Ovary (tissue), 10 donors: ENCODE measurements at regions of chr5 and their contacts with region 1.

Region 1: DNA sequence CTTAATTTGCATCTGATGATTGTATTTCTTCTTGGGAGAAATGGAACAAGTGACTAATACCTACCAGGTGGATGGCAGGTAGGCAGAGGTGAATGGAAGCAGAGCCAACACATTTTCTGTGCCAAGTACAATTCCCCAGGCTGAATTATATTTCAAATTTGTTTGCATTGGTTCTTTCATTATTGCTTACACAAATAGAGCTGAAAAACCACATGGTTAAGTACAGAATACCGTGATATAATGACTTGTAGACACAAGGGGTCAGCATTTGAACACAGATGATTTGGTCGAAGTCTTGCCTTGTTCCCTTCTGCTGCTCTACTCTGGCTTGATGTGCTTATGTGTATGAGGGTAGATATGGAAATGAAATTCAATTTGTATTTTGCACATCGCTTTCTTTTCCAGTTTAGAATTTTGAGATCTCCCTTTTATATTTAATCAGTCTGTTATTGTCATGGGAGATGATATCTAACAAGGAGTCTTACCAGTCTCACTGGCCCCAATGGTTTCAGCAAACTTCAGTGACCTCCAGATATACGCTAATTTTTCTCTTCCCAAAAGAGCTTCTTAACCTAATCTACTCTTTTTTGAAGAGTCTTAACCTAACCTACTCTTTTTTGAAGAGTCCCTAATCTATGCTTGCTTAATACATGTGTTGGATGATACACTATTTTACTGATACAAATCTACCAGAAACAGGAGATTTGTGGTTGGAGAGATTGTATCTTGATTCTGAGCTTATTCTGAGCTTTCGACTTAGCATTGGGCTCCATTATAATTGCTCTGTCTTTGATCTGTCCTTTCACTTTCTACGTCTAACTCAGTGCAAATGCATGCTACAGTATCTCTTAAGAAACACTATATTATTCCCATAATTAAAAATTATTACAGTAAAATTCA is 88.1 kb downstream of the PCSK1 start:
- DNase-seq: no peak
- H3K4me3 ChIP-seq: no peak overlapping the region
- H3K27ac ChIP-seq: no peak overlapping the region
- H3K4me1 ChIP-seq: no peaks in the 10 kb centered on the region
- H3K27me3 ChIP-seq: no peaks in the 10 kb centered on the region
- CTCF ChIP-seq: peak in 1 of 3 donors; percentile 30
- EP300 ChIP-seq: no peak
- POLR2A ChIP-seq: no peak

Region 2: GRCh38 chr5:96370976-96371375 is 26.0 kb after region 1 on chr5:
- intact Hi-C with region 1: no loop called
- DNase-seq: no peak
- H3K4me3 ChIP-seq: no peak overlapping the region
- H3K27ac ChIP-seq: no peak overlapping the region
- H3K4me1 ChIP-seq: no peaks in the 10 kb centered on the region
- H3K27me3 ChIP-seq: no peaks in the 10 kb centered on the region
- CTCF ChIP-seq: no peak
- EP300 ChIP-seq: no peak
- POLR2A ChIP-seq: no peak

Region 3: GRCh38 chr5:96601811-96602244 is 256.9 kb after region 1 on chr5:
- intact Hi-C with region 1: loop called in 3 of 4 experiments (anchors 5 kb)
- DNase-seq: peak in 1 of 5 donors; percentile 47
- H3K4me3 ChIP-seq: no peak overlapping the region
- H3K27ac ChIP-seq: no peak overlapping the region
- H3K4me1 ChIP-seq: no peaks in the 10 kb centered on the region
- H3K27me3 ChIP-seq: no peaks in the 10 kb centered on the region
- CTCF ChIP-seq: peak; percentile 36 to 66 (median 52)
- EP300 ChIP-seq: no peak
- POLR2A ChIP-seq: no peak